ENCODE measurements at regions of chr13 and their contacts with region 1.

Region 1: GRCh38 chr13:27826379-27827353 is 34.4 kb downstream of the GSX1 start:
- DNase-seq: peak; percentile 76
- H3K4me3 Mint-ChIP-seq: no peak overlapping the region
- H3K27ac Mint-ChIP-seq: no peak overlapping the region
- H3K4me1 Mint-ChIP-seq: peaks cover 8% of the 10 kb centered on the region
- H3K27me3 Mint-ChIP-seq: peaks cover 56% of the 10 kb centered on the region

Region 2: DNA sequence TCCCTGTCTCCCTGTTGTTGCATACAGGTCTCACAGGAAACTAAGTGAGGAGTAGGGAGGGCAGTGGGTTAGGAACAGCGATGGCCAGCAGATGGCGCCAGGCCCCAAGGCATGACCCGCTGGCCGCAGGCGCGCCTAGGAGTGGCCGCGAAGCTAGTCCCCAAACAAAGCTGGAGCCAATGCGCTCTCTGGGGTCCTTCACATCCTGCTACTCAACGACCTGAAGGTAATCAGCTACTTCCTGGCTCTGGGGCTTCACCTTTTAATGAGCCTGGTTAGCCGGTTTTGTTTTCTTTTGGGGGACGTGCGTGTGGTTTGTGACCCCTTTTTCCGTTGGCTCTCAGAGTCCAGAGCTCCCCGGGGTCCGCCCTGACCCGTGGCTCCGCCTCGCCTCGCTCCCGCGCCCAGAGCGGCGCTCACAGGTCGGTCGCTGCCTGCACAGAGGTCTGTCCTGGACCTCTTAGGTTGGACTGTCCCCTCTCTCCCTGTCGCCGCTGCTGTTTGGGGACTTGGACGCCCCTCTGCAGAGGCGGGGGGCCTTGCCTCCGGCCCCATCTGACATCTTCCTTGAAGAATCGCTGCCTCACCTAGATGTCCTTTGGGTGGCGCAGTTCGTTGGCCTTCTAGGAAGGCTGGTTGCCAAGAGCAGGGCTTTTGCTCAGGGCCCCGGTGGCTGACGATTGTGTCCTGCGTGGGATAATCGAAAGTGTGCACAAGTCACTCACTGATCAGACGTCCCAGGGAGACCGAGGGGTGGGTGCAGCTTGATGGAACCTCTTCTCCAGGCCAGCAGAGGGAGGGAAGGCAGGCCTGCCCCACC is 464.4 kb before region 1 on chr13:
- CTCF ChIA-PET with region 1: interaction called, 179 read pairs
- POLR2A ChIA-PET with region 1: no interaction called
- intact Hi-C with region 1: loop called (anchors 1 kb)
- DNase-seq: peak; percentile 85
- H3K4me3 Mint-ChIP-seq: no peak overlapping the region
- H3K27ac Mint-ChIP-seq: no peak overlapping the region
- H3K4me1 Mint-ChIP-seq: no peaks in the 10 kb centered on the region
- H3K27me3 Mint-ChIP-seq: peaks cover 22% of the 10 kb centered on the region

Region 3: GRCh38 chr13:27406178-27406939 is 420.3 kb before region 1 on chr13:
- CTCF ChIA-PET with region 1: interaction called, 24 read pairs
- POLR2A ChIA-PET with region 1: no interaction called
- intact Hi-C with region 1: no loop called
- DNase-seq: peak; percentile 36
- H3K4me3 Mint-ChIP-seq: no peak overlapping the region
- H3K27ac Mint-ChIP-seq: no peak overlapping the region
- H3K4me1 Mint-ChIP-seq: peaks cover 8% of the 10 kb centered on the region
- H3K27me3 Mint-ChIP-seq: peaks cover 13% of the 10 kb centered on the region

Region 4: GRCh38 chr13:27770809-27771208 is 55.9 kb before region 1 on chr13:
- CTCF ChIA-PET with region 1: interaction called, 54 read pairs
- POLR2A ChIA-PET with region 1: no interaction called
- intact Hi-C with region 1: loop called (anchors 2 kb)
- DNase-seq: peak; percentile 40
- H3K4me3 Mint-ChIP-seq: no peak overlapping the region
- H3K27ac Mint-ChIP-seq: no peak overlapping the region
- H3K4me1 Mint-ChIP-seq: no peaks in the 10 kb centered on the region
- H3K27me3 Mint-ChIP-seq: peaks cover 15% of the 10 kb centered on the region

Region 5: GRCh38 chr13:27839809-27840467 is 13.3 kb after region 1 on chr13:
- CTCF ChIA-PET with region 1: interaction called, 42 read pairs
- POLR2A ChIA-PET with region 1: no interaction called
- intact Hi-C with region 1: no loop called
- DNase-seq: no peak
- H3K4me3 Mint-ChIP-seq: no peak overlapping the region
- H3K27ac Mint-ChIP-seq: no peak overlapping the region
- H3K4me1 Mint-ChIP-seq: no peaks in the 10 kb centered on the region
- H3K27me3 Mint-ChIP-seq: peaks cover 24% of the 10 kb centered on the region

Region 6: GRCh38 chr13:27968316-27969081 is 141.8 kb after region 1 on chr13:
- CTCF ChIA-PET with region 1: interaction called, 10 read pairs
- POLR2A ChIA-PET with region 1: no interaction called
- intact Hi-C with region 1: no loop called
- DNase-seq: no peak
- H3K4me3 Mint-ChIP-seq: no peak overlapping the region
- H3K27ac Mint-ChIP-seq: no peak overlapping the region
- H3K4me1 Mint-ChIP-seq: peaks cover 26% of the 10 kb centered on the region
- H3K27me3 Mint-ChIP-seq: peaks cover 71% of the 10 kb centered on the region

Region 7: DNA sequence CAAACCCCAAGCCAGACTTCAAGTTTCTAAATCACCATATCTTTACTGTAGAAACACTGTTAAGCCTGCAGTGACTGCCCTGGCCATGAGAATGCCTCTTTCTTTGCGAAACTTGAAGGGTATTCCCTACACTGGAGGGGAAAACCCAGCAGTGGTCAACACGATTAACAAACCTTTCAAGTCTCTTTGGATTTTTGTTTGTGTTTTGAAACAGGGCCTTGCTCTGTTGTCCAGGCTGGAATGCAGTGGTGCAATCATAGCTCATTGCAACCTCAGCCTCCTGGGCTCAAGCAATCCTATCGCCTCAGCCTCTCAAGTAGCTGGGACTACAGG is 814.9 kb after region 1 on chr13:
- CTCF ChIA-PET with region 1: no interaction called
- POLR2A ChIA-PET with region 1: no interaction called
- intact Hi-C with region 1: no loop called
- DNase-seq: no peak
- H3K4me3 Mint-ChIP-seq: no peak overlapping the region
- H3K27ac Mint-ChIP-seq: no peak overlapping the region
- H3K4me1 Mint-ChIP-seq: peaks cover 4% of the 10 kb centered on the region
- H3K27me3 Mint-ChIP-seq: peaks cover 13% of the 10 kb centered on the region

Measured in activated CD4-positive, alpha-beta memory T cell treated with anti-CD3 and anti-CD28 coated beads for 36 hours (primary cell).